ENCODE measurements at regions of chr3 and their contacts with region 1.

Region 1: GRCh38 chr3:192444096-192444790 is 283.1 kb downstream of the FGF12 start:
- DNase-seq: no peak
- H3K4me3 ChIP-seq: no peak overlapping the region
- H3K27ac ChIP-seq: no peak overlapping the region
- H3K4me1 ChIP-seq: no peaks in the 10 kb centered on the region
- H3K27me3 ChIP-seq: peaks cover 0 to 58% (median 0%) of the 10 kb centered on the region in 4 donors
- CTCF ChIP-seq: peak; percentile 65 to 96 (median 92)
- POLR2A ChIP-seq: no peak

Region 2: GRCh38 chr3:191412759-191413158 is 1031.5 kb before region 1 on chr3:
- intact Hi-C with region 1: loop called (anchors 10 kb)
- DNase-seq: no peak
- H3K4me3 ChIP-seq: no peak overlapping the region
- H3K27ac ChIP-seq: no peak overlapping the region
- H3K4me1 ChIP-seq: no peaks in the 10 kb centered on the region
- H3K27me3 ChIP-seq: no peaks in the 10 kb centered on the region
- CTCF ChIP-seq: no peak
- POLR2A ChIP-seq: no peak

Region 3: DNA sequence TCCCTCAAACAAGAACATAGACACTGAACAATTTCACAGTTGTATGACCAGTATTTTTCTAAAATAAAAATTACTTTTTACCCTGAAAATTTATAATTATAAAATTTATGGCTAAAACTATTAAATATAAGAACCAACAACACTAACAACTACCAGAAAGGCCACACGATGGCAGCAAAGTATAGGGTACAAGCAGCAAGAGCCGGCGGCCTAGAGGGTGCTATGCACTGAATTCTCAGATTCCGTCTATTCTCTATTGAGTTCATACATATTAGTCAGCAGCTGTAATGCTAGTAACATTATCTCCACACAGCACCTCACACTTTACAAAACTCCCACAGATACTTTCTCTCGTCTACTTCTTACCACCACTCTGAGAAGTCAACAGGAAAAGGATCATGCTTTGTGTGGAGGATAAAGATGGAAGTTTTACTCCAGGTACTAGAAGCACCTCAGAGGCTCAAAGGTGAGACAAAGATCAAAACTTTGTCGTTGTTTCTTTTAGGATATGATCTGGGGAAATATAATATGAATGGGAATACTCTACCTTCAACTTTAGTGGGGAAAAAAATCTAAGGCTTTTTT is 122.6 kb after region 1 on chr3:
- intact Hi-C with region 1: no loop called
- DNase-seq: peak; percentile 1
- H3K4me3 ChIP-seq: no peak overlapping the region
- H3K27ac ChIP-seq: no peak overlapping the region
- H3K4me1 ChIP-seq: peaks cover 0 to 12% (median 0%) of the 10 kb centered on the region in 3 donors
- H3K27me3 ChIP-seq: no peaks in the 10 kb centered on the region
- CTCF ChIP-seq: peak; percentile 24 to 73 (median 64)
- POLR2A ChIP-seq: no peak

Measured in esophagus squamous epithelium (tissue), 5 donors.